ENCODE measurements at regions of chr9 and their contacts with region 1.

Region 1: DNA sequence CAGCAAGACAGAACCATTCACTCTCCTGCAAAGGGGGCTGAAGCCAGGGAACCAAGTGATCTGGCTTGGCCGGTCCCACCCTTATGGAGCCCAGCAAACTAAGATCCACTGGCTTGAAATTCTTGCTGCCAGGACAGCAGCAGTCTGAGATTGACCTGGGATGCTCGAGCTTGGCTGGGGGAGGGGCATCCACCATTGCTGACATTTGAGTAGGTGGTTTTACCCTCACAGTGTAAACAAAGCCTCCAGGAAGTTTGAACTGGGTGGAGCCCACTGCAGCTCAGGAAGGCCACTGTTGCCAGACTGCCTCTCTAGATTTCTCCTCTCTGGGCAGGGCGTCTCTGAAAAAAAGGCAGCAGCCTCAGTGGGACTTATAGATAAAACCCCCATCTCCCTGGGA is 60.5 kb downstream of the TNFSF8 start:
- DNase-seq: peak in 4 of 10 donors; percentile 8 to 31 (median 22)
- ATAC-seq: no peak
- H3K4me3 Mint-ChIP-seq: peak overlapping the region; percentile 19 to 69 (median 48)
- H3K27ac Mint-ChIP-seq: peak overlapping the region in 9 of 10 donors; percentile 27 to 87 (median 77)
- H3K4me1 Mint-ChIP-seq: peaks cover 5 to 33% (median 27%) of the 10 kb centered on the region in 4 donors
- H3K27me3 Mint-ChIP-seq: no peaks in the 10 kb centered on the region

Region 2: DNA sequence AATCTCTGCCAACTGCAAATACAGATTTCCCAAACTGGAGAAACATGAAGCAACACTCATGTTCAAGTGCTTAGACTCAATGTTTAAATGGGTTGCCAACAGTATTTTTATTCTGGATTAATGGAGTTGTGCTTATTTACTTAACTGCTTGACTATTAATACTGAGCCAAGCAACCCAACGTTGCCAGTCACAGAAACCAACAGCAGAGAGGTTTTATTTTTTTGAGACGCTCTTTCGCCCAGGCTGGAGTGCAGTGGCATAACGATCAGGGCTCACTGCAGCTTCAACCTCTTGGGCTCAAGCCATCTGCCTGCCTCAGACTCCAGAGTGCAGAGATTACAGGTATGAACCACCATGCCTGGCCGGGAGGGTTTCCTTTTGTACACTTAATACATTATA is 267.2 kb before region 1 on chr9:
- POLR2A ChIA-PET with region 1: no interaction called
- DNase-seq: no peak
- ATAC-seq: no peak
- H3K4me3 Mint-ChIP-seq: no peak overlapping the region
- H3K27ac Mint-ChIP-seq: peak overlapping the region in 5 of 10 donors; percentile 10 to 68 (median 35)
- H3K4me1 Mint-ChIP-seq: peaks cover 8 to 22% (median 15%) of the 10 kb centered on the region in 4 donors
- H3K27me3 Mint-ChIP-seq: no peaks in the 10 kb centered on the region

Region 3: GRCh38 chr9:114811301-114811700 is 58.5 kb before region 1 on chr9:
- POLR2A ChIA-PET with region 1: no interaction called
- DNase-seq: no peak
- ATAC-seq: no peak
- H3K4me3 Mint-ChIP-seq: no peak overlapping the region
- H3K27ac Mint-ChIP-seq: no peak overlapping the region
- H3K4me1 Mint-ChIP-seq: peaks cover 13 to 25% (median 15%) of the 10 kb centered on the region in 4 donors
- H3K27me3 Mint-ChIP-seq: no peaks in the 10 kb centered on the region

Region 4: DNA sequence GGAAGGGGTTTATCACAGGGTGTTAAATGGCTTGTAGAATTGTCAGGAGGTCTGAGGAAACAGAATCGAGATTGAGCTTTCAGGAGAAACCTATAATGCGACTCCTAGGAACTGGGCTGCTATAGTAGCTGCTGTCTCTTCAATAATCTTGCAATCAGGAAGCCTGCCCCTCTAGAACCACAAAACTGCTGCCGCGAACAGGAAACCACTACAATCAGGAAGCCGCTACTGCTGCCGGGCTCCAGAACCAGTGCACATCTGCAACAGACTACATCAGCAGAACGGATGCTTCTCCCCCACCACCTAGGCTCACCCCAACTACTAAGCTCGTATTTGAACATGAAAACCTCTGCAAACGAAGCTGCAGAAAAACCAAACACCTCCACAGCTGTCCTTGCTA is 28.9 kb after region 1 on chr9:
- POLR2A ChIA-PET with region 1: interaction called, 11 read pairs
- DNase-seq: peak; percentile 46 to 92 (median 82)
- ATAC-seq: peak; percentile 98 to 99
- H3K4me3 Mint-ChIP-seq: no peak overlapping the region
- H3K27ac Mint-ChIP-seq: no peak overlapping the region
- H3K4me1 Mint-ChIP-seq: peaks cover 23 to 36% (median 24%) of the 10 kb centered on the region in 4 donors
- H3K27me3 Mint-ChIP-seq: no peaks in the 10 kb centered on the region

Measured in naive thymus-derived CD8-positive, alpha-beta T cell (primary cell).